ENCODE measurements at regions of chr17 and their contacts with region 1.

Region 1: GRCh38 chr17:30124273-30124796 is 7.7 kb downstream of the NSRP1 start:
- DNase-seq: no peak
- ATAC-seq: no peak
- H3K4me3 ChIP-seq: no peak overlapping the region
- H3K27ac ChIP-seq: no peak overlapping the region
- H3K4me1 ChIP-seq: peaks cover 17% of the 10 kb centered on the region
- H3K27me3 ChIP-seq: no peaks in the 10 kb centered on the region
- CTCF ChIP-seq: no peak

Region 2: GRCh38 chr17:30187573-30187972 is 63.2 kb after region 1 on chr17:
- intact Hi-C with region 1: loop called in 1 of 2 experiments (anchors 10 kb)
- DNase-seq: no peak
- ATAC-seq: no peak
- H3K4me3 ChIP-seq: no peak overlapping the region
- H3K27ac ChIP-seq: no peak overlapping the region
- H3K4me1 ChIP-seq: no peaks in the 10 kb centered on the region
- H3K27me3 ChIP-seq: no peaks in the 10 kb centered on the region
- CTCF ChIP-seq: no peak

Measured in psoas muscle (tissue), 8 donors.